HCT116 (cell line): ENCODE measurements at regions of chr1 and their contacts with region 1.

Region 1: GRCh38 chr1:156728597-156729462 is at the start of gene ISG20L2:
- DNase-seq: peak; percentile 97
- ATAC-seq: peak; percentile 85
- H3K4me3 ChIP-seq: peak within 1 kb of the TSS; percentile 92 to 93
- H3K27ac ChIP-seq: peak within 1 kb of the TSS; percentile 81
- H3K4me1 ChIP-seq: peaks cover 24 to 34% of the 10 kb centered on the region in 2 experiments
- H3K27me3 ChIP-seq: no peaks in the 10 kb centered on the region
- CTCF ChIP-seq: no peak
- POLR2A ChIP-seq: no peak
- RAD21 ChIP-seq: no peak
- total RNA-seq, gene ISG20L2: 41.7 TPM

Region 2: DNA sequence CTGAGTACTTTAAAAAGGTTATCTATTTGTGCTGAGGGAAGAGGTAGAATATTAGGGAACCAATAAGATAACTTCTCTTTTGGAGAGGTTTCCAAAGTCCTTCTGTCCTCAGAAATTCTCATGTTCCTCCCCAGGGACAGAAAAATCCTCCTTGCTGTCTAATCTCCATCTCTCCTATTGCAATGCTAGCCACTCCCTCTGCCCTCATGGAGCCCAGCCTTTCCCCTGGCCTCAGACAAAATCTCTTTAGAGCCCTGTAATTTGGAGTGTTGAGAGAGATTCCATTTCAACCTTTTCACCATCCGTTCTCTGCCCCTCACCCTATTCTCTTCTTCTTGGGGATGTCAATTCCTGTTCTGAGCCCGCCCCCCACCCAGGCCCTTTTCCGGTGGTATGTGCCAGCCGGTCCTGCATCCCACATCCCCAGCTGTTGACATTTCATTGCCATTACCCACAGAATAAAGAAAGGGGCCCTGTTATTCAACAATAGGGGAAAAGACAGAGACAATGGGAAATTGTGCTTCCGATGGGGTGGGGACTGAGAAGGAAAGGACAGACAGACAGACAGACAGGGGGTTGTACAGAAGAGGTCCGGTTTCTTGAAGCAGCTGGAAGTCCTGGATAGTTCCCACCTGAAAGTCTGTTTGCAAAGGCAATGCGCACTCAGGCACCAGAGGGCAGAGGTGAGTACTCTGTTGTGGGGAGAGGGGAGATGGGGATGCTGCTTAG is 109.8 kb before region 1 on chr1 and contains the start of gene HAPLN2:
- CTCF ChIA-PET with region 1: interaction called, 13 read pairs
- POLR2A ChIA-PET with region 1: no interaction called
- RAD21 ChIA-PET with region 1: no interaction called
- intact Hi-C with region 1: no loop called
- DNase-seq: no peak
- ATAC-seq: peak; percentile 84
- H3K4me3 ChIP-seq: no peak within 1 kb of the TSS
- H3K27ac ChIP-seq: no peak within 1 kb of the TSS
- H3K4me1 ChIP-seq: peaks cover 8 to 11% of the 10 kb centered on the region in 2 experiments
- H3K27me3 ChIP-seq: no peaks in the 10 kb centered on the region
- CTCF ChIP-seq: peak; percentile 22 to 80 (median 61); a peak in 5 of 6 replicates
- POLR2A ChIP-seq: no peak
- RAD21 ChIP-seq: peak; percentile 35
- total RNA-seq, gene HAPLN2: 0.54 TPM

Region 3: GRCh38 chr1:156677616-156678596 is 50.9 kb before region 1 on chr1:
- CTCF ChIA-PET with region 1: interaction called, 13 read pairs
- POLR2A ChIA-PET with region 1: interaction called, 5 read pairs
- RAD21 ChIA-PET with region 1: no interaction called
- intact Hi-C with region 1: no loop called
- DNase-seq: no peak
- ATAC-seq: peak; percentile 71
- H3K4me3 ChIP-seq: peak overlapping the region; percentile 39 to 53
- H3K27ac ChIP-seq: peak overlapping the region; percentile 36; the same call in 1 of the 2 replicates
- H3K4me1 ChIP-seq: peaks cover 14 to 32% of the 10 kb centered on the region in 2 experiments
- H3K27me3 ChIP-seq: no peaks in the 10 kb centered on the region
- CTCF ChIP-seq: peak; percentile 88 to 98 (median 95)
- POLR2A ChIP-seq: no peak
- RAD21 ChIP-seq: peak; percentile 99

Region 4: DNA sequence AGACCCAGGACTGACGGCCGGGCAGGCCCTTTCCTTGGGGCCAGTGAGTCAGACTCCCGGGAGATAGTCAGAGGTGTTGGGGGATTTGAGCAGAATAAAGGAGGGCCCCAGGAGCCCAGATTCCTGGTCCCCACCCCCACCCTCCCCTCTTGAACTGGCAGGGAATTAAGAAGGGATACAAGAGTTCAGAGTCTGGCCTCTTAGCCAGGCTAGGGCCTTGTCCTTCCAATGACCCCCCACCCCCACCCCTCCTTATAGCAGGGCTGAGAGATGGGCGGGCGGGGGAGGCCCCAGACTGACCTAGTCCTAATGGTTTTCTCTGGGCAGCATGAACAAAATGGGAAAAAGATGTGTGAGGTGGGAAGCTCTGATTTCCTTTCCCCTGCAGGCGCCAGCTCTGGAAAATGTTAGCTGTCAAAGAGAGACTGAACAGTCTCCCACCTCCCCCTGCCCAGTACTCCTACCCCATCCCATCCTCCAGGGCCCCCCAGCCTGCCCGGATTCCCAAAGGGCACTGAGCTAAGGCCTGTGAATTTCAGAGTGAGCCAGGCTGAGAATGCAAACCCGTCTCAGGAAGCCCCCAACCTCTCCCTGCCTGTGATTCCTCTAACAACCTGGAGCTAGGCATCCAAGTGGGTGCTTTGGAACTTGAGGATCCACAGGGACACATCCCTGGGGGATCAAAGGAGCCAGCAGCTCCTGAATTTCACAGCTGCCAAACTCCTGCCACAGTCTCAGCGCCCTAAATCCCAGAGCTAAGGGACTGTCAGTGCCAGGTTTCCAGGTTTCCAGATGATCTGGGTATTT is 17.6 kb before region 1 on chr1:
- CTCF ChIA-PET with region 1: interaction called, 59 read pairs
- POLR2A ChIA-PET with region 1: interaction called, 22 read pairs
- RAD21 ChIA-PET with region 1: interaction called, 13 read pairs
- intact Hi-C with region 1: no loop called
- DNase-seq: no peak
- ATAC-seq: no peak
- H3K4me3 ChIP-seq: no peak overlapping the region
- H3K27ac ChIP-seq: 0 out of 2 replicates have a peak overlapping the region, but pooled peaks have one; percentile 66
- H3K4me1 ChIP-seq: peaks cover 88 to 90% of the 10 kb centered on the region in 2 experiments
- H3K27me3 ChIP-seq: no peaks in the 10 kb centered on the region
- CTCF ChIP-seq: no peak
- POLR2A ChIP-seq: no peak
- RAD21 ChIP-seq: no peak

Region 5: DNA sequence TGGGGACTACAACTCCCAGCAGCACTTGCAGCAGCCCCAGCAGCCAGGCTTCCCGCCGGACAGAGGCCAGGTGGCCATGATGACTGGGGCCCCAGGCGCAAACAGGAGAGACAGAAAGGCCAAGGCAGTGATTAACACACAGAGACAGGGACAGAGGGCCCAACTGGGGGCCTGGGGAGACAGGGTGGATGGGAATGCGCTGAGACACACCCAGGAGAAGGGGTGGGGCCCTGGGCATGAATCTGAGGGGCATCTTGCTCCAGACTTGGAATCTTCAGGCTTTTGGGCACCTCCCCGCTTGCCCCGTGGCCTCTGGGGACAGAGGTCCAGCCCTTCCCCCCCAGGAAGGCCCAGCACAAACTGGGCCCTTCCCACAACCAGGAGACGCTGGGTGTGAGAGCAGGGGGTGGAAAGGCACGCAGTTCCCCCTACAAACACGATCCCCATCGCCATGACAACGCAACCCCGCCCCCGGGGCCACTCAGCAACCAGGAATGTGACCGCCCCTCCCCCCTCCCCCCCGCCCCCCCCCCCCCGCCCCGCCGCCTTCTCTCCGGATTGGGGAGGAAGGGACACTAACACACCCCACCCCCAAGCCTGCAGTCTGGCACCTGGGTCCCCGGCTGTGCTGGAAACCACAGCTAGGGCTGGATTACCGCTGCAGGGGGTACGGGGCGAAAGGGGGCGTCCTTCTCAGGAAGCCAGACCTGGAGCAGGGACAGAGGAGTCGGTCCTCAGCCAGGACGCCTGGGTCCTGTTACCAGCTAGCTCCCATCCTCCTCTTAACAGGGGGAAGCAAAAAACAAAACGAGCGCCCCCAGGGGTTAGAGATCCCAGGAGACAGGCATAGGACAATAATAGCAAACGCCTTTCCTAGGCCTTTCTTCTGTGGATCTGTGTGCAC is 18.1 kb after region 1 on chr1:
- CTCF ChIA-PET with region 1: interaction called, 12 read pairs
- POLR2A ChIA-PET with region 1: interaction called, 28 read pairs
- RAD21 ChIA-PET with region 1: interaction called, 3 read pairs
- intact Hi-C with region 1: no loop called
- DNase-seq: peak; percentile 61
- ATAC-seq: peak; percentile 47
- H3K4me3 ChIP-seq: peak overlapping the region; percentile 67 to 97
- H3K27ac ChIP-seq: peak overlapping the region; percentile 99
- H3K4me1 ChIP-seq: peaks cover 29 to 64% of the 10 kb centered on the region in 2 experiments
- H3K27me3 ChIP-seq: no peaks in the 10 kb centered on the region
- CTCF ChIP-seq: peak in 2 of 3 experiments; percentile 39 to 41; a peak in 3 of 6 replicates
- POLR2A ChIP-seq: no peak
- RAD21 ChIP-seq: no peak

Region 6: DNA sequence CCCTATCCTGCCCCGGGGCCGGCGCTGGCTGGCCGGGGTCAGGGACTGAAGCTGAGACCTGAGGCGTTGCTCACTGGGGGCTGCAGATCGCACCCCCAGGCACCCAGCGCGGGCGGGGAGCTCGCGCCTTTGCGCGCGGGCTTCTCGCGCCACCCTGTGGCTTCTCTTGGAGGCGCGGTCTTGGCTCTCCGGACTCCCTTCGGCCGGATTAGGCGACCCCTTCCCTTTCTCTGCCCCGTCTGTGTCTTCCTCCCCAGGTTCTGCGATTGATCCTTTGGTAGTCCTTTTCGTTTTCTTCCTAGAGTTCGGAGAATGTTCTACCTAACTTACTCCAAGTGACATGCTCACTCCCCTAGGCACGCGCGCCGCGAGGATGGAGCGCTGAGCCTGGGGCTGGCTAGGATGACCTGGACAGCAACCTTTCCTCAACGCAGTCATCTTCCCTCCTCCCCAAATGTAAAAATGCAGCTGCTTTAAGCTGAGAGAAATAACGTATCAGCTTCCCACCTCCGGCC is 131.3 kb after region 1 on chr1:
- CTCF ChIA-PET with region 1: interaction called, 136 read pairs
- POLR2A ChIA-PET with region 1: interaction called, 10 read pairs
- RAD21 ChIA-PET with region 1: interaction called, 8 to 15 read pairs
- intact Hi-C with region 1: loop called (anchors 1 kb)
- DNase-seq: peak; percentile 28
- ATAC-seq: peak; percentile 89
- H3K4me3 ChIP-seq: peak overlapping the region; percentile 30 to 55
- H3K27ac ChIP-seq: no peak overlapping the region
- H3K4me1 ChIP-seq: peaks cover 4 to 17% of the 10 kb centered on the region in 2 experiments; a peak in 3 of 4 replicates
- H3K27me3 ChIP-seq: peaks cover 3% of the 10 kb centered on the region; the same call in 1 of the 2 replicates
- CTCF ChIP-seq: peak; percentile 82 to 94 (median 83)
- POLR2A ChIP-seq: no peak
- RAD21 ChIP-seq: peak; percentile 96

Region 7: DNA sequence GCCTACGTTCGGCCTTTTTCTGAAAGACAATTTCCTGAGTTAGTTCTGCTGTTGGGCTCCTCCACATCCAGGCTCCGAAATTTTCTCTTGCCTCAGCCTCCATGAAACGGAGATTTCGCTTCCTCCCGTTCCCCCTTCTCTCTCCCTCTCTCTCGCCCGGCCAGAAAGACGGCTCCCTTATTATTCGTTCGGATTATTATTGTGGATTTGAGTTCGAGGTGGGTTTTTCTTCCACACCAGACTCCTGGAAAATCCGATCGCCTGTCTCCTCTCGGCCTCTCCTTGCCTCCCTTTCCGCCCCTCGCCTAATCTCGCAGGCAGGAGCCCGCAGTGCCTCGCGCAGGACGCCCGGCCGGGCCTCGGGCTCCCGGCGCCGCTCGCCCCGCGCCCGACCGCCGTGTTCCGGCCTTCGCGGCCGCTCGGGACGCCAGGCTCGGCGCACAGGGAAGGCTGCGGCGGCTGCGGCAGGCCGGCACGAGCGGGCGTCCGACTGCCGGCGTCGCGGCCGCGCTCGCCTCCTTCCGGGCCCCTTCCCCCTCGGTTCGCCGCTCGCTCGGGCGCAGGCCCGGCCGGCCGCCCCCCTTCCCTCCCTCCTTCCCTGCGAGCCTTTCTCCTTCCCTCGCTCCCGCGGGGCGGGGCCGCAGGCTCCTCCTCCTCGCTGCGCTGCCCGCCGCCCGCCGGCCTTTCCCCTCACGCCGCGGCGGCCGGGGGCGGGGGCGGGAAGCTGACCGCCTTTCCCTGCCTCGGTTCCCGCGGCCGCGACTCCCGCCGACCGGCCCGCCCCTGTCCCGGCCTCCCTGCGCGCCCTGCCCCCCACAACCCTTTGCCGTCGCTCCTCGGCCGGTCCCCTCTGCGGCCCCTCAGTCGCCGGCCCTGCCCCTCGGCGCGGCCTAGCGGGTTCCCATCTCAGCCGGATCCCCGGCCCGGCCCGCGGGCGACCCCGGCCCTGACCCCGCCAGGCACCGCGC is 316.7 kb after region 1 on chr1 and contains the start of gene ARHGEF11:
- CTCF ChIA-PET with region 1: no interaction called
- POLR2A ChIA-PET with region 1: no interaction called
- RAD21 ChIA-PET with region 1: no interaction called
- intact Hi-C with region 1: no loop called
- DNase-seq: peak; percentile 64
- ATAC-seq: peak; percentile 95
- H3K4me3 ChIP-seq: peak within 1 kb of the TSS; percentile 50 to 81
- H3K27ac ChIP-seq: peak within 1 kb of the TSS; percentile 80
- H3K4me1 ChIP-seq: peaks cover 13 to 26% of the 10 kb centered on the region in 2 experiments
- H3K27me3 ChIP-seq: no peaks in the 10 kb centered on the region
- CTCF ChIP-seq: no peak
- POLR2A ChIP-seq: peak; percentile 48
- RAD21 ChIP-seq: no peak
- total RNA-seq, gene ARHGEF11: 28.9 TPM